GM13976 (cell line): ENCODE measurements at regions of chr15 and their contacts with region 1.

Region 1: DNA sequence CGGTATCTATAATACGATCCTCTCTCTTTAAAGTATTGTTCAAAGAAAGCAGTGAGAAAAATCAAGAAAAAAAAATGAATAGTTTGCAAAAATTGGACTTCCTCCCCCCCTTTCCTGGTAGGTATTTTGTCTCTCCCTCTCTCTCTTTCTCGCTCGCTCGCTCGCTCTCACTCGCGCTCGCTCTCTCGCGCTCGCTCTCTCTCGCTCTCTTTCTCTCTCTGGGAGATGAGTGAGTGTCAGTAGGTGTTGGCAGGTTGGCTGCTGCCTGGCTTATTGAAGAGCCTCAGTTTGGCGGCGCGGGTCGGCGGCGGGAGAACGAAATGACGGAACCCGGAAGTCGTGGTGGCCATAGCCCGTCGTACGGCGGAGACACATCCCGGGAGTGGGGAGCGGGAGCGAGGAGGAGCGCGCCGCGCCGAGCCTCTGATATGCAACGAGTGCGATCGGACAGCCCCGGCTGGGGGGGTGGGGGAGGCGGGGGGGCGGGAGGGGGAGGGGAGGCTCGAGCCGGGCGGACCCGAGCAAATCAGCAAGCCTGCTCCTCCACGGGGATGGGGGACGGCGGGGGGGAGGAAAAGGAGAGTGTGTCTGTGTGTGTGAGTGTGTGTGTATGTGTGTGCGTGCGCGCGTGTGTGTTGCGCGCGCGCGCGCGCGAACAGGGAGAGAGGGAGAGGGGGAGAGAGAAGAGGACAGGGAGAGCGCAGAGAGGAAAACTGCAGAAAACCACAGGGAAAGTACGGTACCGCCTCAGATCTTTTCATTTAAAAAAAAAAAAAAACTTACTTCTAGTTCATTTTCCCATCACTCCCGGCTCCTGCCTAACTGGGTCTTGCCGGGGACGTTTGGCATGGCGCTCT is at the start of gene MEIS2:
- DNase-seq: peak; percentile 79
- CTCF ChIP-seq: no peak

Region 2: GRCh38 chr15:35519541-35520149 is 1580.7 kb before region 1 on chr15:
- in situ Hi-C with region 1: loop called (anchors 25 kb)
- DNase-seq: peak; percentile 13
- CTCF ChIP-seq: peak; percentile 41